Activated naive CD4-positive, alpha-beta T cell treated with anti-CD3 and anti-CD28 coated beads for 36 hours (primary cell): ENCODE measurements at regions of chr17 and their contacts with region 1.

Region 1: DNA sequence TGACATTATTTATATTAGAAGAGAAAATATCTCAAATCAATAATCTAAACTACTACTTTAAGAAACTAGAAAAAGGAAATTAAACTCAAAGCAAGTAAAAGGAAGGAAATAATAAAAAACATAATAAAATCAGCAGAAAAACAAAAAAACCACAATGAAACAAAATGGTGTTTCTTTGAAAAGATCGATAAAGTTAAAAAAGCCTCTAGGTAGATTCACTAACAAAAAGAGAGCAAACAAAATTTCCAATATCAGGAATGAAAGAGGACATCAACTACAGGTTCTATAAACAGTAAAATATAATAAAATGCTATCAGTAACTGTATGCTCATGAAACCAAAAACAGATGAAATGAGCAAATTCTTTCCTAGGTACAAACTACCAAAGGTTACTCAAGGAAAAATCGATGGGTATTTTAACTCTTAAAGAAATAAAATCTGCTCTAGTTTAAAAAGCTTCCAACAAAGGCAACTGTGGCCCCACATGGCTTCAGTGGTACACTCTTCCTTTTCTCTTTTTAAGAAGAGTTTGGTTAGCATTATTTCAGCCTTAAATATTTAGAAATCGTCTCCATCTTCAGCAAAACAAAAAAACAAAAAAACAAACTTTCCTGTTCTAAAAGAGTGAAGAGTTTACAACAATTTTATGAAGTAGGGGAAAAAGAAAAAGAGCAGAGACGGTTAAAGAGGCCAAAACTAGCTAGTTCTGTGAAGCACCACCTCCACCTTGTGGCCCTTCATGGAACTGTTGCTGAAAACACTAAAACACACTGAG is 102.2 kb downstream of the TRIM37 start:
- DNase-seq: peak; percentile 86
- H3K4me3 Mint-ChIP-seq: no peak overlapping the region
- H3K27ac Mint-ChIP-seq: peak overlapping the region; percentile 61
- H3K4me1 Mint-ChIP-seq: peaks cover 28% of the 10 kb centered on the region
- H3K27me3 Mint-ChIP-seq: no peaks in the 10 kb centered on the region

Region 2: GRCh38 chr17:58587702-58588254 is 416.7 kb before region 1 on chr17:
- CTCF ChIA-PET with region 1: interaction called, 5 read pairs
- intact Hi-C with region 1: loop called (anchors 1 kb)
- DNase-seq: peak; percentile 76
- H3K4me3 Mint-ChIP-seq: no peak overlapping the region
- H3K27ac Mint-ChIP-seq: no peak overlapping the region
- H3K4me1 Mint-ChIP-seq: peaks cover 2% of the 10 kb centered on the region
- H3K27me3 Mint-ChIP-seq: no peaks in the 10 kb centered on the region

Region 3: GRCh38 chr17:58710936-58711775 is 293.4 kb before region 1 on chr17:
- CTCF ChIA-PET with region 1: interaction called, 15 read pairs
- intact Hi-C with region 1: loop called (anchors 1 kb)
- DNase-seq: peak; percentile 65
- H3K4me3 Mint-ChIP-seq: no peak overlapping the region
- H3K27ac Mint-ChIP-seq: no peak overlapping the region
- H3K4me1 Mint-ChIP-seq: peaks cover 8% of the 10 kb centered on the region
- H3K27me3 Mint-ChIP-seq: no peaks in the 10 kb centered on the region

Region 4: DNA sequence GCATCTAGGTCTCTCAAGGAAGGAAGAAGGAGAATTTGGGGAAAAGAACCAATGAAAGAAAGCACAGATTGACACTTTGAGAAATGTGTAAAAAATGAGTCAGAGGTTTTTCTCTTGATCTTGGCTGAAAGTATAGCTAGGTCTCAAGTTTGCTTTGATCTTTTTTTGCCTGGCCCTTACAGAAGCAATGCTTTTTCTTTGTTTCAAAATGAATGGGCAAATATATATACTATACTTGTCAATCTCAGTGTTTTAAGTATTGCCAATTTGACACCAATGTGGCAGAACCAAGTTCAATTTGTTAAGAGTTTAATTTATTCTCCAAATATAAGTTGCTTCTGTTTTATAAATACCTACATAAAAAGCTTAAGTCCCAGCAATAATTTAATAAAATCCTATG is 129.3 kb before region 1 on chr17:
- CTCF ChIA-PET with region 1: interaction called, 3 read pairs
- intact Hi-C with region 1: loop called (anchors 2 kb)
- DNase-seq: no peak
- H3K4me3 Mint-ChIP-seq: no peak overlapping the region
- H3K27ac Mint-ChIP-seq: no peak overlapping the region
- H3K4me1 Mint-ChIP-seq: peaks cover 8% of the 10 kb centered on the region
- H3K27me3 Mint-ChIP-seq: no peaks in the 10 kb centered on the region

Region 5: GRCh38 chr17:58985971-58986370 is 18.6 kb before region 1 on chr17:
- CTCF ChIA-PET with region 1: interaction called, 5 read pairs
- intact Hi-C with region 1: loop called (anchors 2 kb)
- DNase-seq: peak; percentile 59
- H3K4me3 Mint-ChIP-seq: no peak overlapping the region
- H3K27ac Mint-ChIP-seq: no peak overlapping the region
- H3K4me1 Mint-ChIP-seq: peaks cover 8% of the 10 kb centered on the region
- H3K27me3 Mint-ChIP-seq: no peaks in the 10 kb centered on the region

Region 6: GRCh38 chr17:59296771-59297500 is 292.4 kb after region 1 on chr17:
- CTCF ChIA-PET with region 1: no interaction called
- intact Hi-C with region 1: no loop called
- DNase-seq: no peak
- H3K4me3 Mint-ChIP-seq: no peak overlapping the region
- H3K27ac Mint-ChIP-seq: no peak overlapping the region
- H3K4me1 Mint-ChIP-seq: no peaks in the 10 kb centered on the region
- H3K27me3 Mint-ChIP-seq: no peaks in the 10 kb centered on the region